ENCODE measurements at regions of chr4 and their contacts with region 1.

Region 1: GRCh38 chr4:87848622-87849351 is 16.0 kb downstream of the MEPE start:
- DNase-seq: peak; percentile 60
- ATAC-seq: peak; percentile 93
- H3K4me3 Mint-ChIP-seq: no peak overlapping the region
- H3K27ac Mint-ChIP-seq: no peak overlapping the region
- H3K4me1 Mint-ChIP-seq: peaks cover 11% of the 10 kb centered on the region
- H3K27me3 Mint-ChIP-seq: peaks cover 15% of the 10 kb centered on the region

Region 2: DNA sequence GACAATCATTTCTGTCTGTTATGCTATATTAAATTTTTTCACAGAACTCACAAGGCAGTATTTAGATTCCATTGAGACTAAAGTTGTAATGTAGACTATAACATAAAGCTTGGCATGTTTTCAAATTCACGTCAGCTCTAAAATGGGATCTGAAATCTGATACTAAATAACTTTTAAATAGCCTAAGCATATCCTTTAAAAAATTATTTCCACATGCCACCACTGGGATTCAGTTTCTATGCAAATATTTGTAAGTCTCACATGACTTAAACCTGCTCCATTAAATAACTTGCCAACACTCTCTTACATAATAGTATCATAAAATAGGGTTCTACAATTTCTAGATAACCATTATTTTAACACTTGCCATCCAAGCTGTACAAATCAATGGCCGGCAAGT is 660.7 kb before region 1 on chr4:
- CTCF ChIA-PET with region 1: no interaction called
- POLR2A ChIA-PET with region 1: no interaction called
- intact Hi-C with region 1: no loop called
- DNase-seq: no peak
- ATAC-seq: no peak
- H3K4me3 Mint-ChIP-seq: no peak overlapping the region
- H3K27ac Mint-ChIP-seq: no peak overlapping the region
- H3K4me1 Mint-ChIP-seq: no peaks in the 10 kb centered on the region
- H3K27me3 Mint-ChIP-seq: no peaks in the 10 kb centered on the region

Region 3: GRCh38 chr4:87353592-87353991 is 495.2 kb before region 1 on chr4:
- CTCF ChIA-PET with region 1: interaction called, 5 read pairs
- POLR2A ChIA-PET with region 1: no interaction called
- intact Hi-C with region 1: loop called (anchors 5 to 10 kb)
- DNase-seq: peak; percentile 69
- ATAC-seq: peak; percentile 74
- H3K4me3 Mint-ChIP-seq: no peak overlapping the region
- H3K27ac Mint-ChIP-seq: no peak overlapping the region
- H3K4me1 Mint-ChIP-seq: peaks cover 2% of the 10 kb centered on the region
- H3K27me3 Mint-ChIP-seq: no peaks in the 10 kb centered on the region

Region 4: DNA sequence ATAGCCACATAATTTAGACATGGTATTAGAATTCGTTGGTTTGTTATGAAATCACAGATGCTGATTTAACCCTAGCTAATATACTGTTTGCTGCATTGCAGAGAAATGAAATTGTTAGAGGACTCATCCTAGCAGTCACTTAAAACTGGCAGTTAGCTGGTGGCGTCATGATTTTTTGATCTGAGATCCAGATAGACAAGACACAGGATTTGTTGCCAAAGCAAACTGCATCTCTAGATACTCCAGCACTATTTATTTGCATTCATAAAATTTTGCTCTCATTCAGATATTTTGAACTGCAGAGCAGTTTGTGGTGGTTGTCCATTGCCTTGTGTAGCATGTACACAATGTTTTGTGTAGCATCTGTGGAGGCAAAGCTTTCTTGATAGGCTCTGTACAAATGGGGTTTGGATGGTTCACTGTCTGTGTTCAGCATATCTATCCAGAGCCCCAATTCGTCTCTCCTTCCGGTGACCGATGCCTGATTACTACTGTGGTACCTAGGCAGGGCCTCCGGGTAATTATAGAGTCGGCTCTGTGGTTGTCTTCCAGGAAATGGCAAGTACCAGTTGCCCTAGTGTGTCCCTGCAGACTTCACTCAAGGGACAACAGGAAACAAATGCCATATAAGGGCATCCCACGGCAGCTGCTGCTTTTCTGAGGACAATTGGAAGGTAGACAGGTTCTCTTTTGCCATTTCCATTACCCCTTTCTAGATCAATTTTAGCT is 289.5 kb before region 1 on chr4:
- CTCF ChIA-PET with region 1: no interaction called
- POLR2A ChIA-PET with region 1: no interaction called
- intact Hi-C with region 1: loop called in 1 of 2 experiments (anchors 5 kb)
- DNase-seq: peak; percentile 62
- ATAC-seq: peak; percentile 89
- H3K4me3 Mint-ChIP-seq: no peak overlapping the region
- H3K27ac Mint-ChIP-seq: no peak overlapping the region
- H3K4me1 Mint-ChIP-seq: peaks cover 31% of the 10 kb centered on the region
- H3K27me3 Mint-ChIP-seq: no peaks in the 10 kb centered on the region

Region 5: DNA sequence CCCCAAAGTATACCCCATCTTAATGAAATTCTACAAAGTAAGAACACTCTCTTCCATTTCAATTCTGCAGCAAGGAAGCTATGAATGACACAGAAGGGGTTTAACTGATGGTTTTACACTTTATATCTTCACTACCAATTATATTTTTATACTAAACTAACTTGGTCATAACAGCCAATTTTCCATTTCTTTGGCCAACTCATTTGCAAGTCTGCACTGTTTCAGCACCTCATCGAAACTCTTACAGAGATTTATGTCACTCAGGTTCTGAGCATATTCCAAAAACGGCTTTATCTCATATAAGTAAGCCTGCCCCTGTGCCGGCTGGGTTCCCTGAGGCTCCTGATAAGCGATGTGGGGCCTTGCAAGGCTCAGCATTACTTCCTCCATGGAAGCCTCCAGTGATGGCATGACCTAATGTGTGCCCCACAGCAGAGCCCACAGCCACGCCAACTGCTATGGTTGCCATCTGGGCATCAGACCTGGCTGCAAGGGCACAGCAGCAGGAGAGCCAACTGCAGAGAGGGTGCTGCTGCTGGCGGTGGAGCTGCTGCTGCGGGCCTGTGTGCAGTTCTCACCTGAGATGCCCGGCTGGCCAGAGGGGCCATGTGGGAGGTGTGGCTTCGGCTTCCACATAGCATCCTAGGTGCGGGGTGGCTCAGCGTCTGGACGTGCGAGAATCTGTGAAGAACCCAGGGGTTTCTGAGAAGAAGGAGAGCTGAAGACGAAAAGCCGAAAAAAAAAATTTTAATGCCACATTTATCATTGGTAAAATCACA is 62.9 kb before region 1 on chr4:
- CTCF ChIA-PET with region 1: no interaction called
- POLR2A ChIA-PET with region 1: no interaction called
- intact Hi-C with region 1: no loop called
- DNase-seq: no peak
- ATAC-seq: no peak
- H3K4me3 Mint-ChIP-seq: no peak overlapping the region
- H3K27ac Mint-ChIP-seq: no peak overlapping the region
- H3K4me1 Mint-ChIP-seq: no peaks in the 10 kb centered on the region
- H3K27me3 Mint-ChIP-seq: no peaks in the 10 kb centered on the region

Region 6: DNA sequence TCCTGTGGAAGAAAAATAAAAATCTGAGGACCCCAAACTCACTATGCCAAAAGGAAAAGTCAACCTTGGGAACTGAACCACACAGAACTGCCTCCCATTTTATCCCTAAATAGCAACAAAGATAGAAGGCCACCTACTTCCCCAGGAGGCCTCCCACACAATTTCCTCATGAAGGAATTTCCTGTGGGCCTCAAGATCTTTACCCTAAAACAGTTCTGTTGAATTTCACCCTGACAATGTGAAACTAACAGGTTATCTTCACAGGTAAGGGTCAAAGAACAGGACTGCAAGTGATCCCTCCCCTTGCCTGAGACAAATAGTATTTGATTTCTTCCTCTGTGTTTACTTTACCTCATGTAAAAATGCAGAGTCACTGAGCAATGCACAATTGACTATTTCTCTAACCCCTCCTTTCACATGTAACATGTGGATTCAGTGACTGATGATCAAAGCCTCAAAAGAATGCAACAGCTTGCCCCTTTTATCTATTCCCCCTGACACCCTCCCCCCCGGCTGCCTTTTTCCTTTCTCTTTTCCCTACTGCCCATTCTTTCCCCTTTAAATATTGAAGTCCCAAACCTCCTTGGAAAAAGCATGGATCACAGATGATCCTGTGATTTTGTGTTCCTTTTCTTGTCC is 17.3 kb after region 1 on chr4:
- CTCF ChIA-PET with region 1: interaction called, 16 read pairs
- POLR2A ChIA-PET with region 1: no interaction called
- intact Hi-C with region 1: no loop called
- DNase-seq: no peak
- ATAC-seq: no peak
- H3K4me3 Mint-ChIP-seq: no peak overlapping the region
- H3K27ac Mint-ChIP-seq: no peak overlapping the region
- H3K4me1 Mint-ChIP-seq: no peaks in the 10 kb centered on the region
- H3K27me3 Mint-ChIP-seq: peaks cover 14% of the 10 kb centered on the region

Region 7: GRCh38 chr4:87985097-87985886 is 136.5 kb after region 1 on chr4:
- CTCF ChIA-PET with region 1: interaction called, 9 read pairs
- POLR2A ChIA-PET with region 1: no interaction called
- intact Hi-C with region 1: loop called in 1 of 2 experiments (anchors 1 kb)
- DNase-seq: peak; percentile 68
- ATAC-seq: peak; percentile 93
- H3K4me3 Mint-ChIP-seq: no peak overlapping the region
- H3K27ac Mint-ChIP-seq: no peak overlapping the region
- H3K4me1 Mint-ChIP-seq: no peaks in the 10 kb centered on the region
- H3K27me3 Mint-ChIP-seq: peaks cover 12% of the 10 kb centered on the region

Region 8: GRCh38 chr4:88514557-88515511 is 666.0 kb after region 1 on chr4:
- CTCF ChIA-PET with region 1: interaction called, 3 read pairs
- POLR2A ChIA-PET with region 1: no interaction called
- intact Hi-C with region 1: loop called in 1 of 2 experiments (anchors 5 kb)
- DNase-seq: no peak
- ATAC-seq: no peak
- H3K4me3 Mint-ChIP-seq: no peak overlapping the region
- H3K27ac Mint-ChIP-seq: no peak overlapping the region
- H3K4me1 Mint-ChIP-seq: peaks cover 2% of the 10 kb centered on the region
- H3K27me3 Mint-ChIP-seq: no peaks in the 10 kb centered on the region

Measured in activated CD4-positive, alpha-beta T cell treated with anti-CD3 and anti-CD28 coated beads for 36 hours (primary cell).